ENCODE measurements at regions of chr7 and their contacts with region 1.

Region 1: GRCh38 chr7:116953727-116954442 is 584 bp downstream of the ST7 start:
- DNase-seq: peak; percentile 43 to 62
- ATAC-seq: peak; percentile 82 to 86
- H3K4me3 ChIP-seq: peak overlapping the region; percentile 74 to 88 (median 83)
- H3K27ac ChIP-seq: peak overlapping the region; percentile 94 to 98 (median 96)
- H3K4me1 ChIP-seq: peaks cover 29 to 33% of the 10 kb centered on the region in 2 donors
- H3K27me3 ChIP-seq: no peaks in the 10 kb centered on the region
- CTCF ChIP-seq: no peak
- POLR2A ChIP-seq: peak; percentile 68 to 79

Region 2: GRCh38 chr7:116988363-116988989 is 34.6 kb after region 1 on chr7:
- in situ Hi-C with region 1: no loop called
- intact Hi-C with region 1: no loop called
- DNase-seq: no peak
- ATAC-seq: no peak
- H3K4me3 ChIP-seq: no peak overlapping the region
- H3K27ac ChIP-seq: no peak overlapping the region
- H3K4me1 ChIP-seq: peaks cover 3 to 6% of the 10 kb centered on the region in 2 donors
- H3K27me3 ChIP-seq: no peaks in the 10 kb centered on the region
- CTCF ChIP-seq: peak in 3 of 5 experiments; percentile 12 to 52 (median 28)
- POLR2A ChIP-seq: no peak

Region 3: GRCh38 chr7:116999311-116999710 is 45.4 kb after region 1 on chr7:
- in situ Hi-C with region 1: no loop called
- intact Hi-C with region 1: no loop called
- DNase-seq: no peak
- ATAC-seq: no peak
- H3K4me3 ChIP-seq: no peak overlapping the region
- H3K27ac ChIP-seq: no peak overlapping the region
- H3K4me1 ChIP-seq: no peaks in the 10 kb centered on the region
- H3K27me3 ChIP-seq: no peaks in the 10 kb centered on the region
- CTCF ChIP-seq: no peak
- POLR2A ChIP-seq: no peak

Region 4: DNA sequence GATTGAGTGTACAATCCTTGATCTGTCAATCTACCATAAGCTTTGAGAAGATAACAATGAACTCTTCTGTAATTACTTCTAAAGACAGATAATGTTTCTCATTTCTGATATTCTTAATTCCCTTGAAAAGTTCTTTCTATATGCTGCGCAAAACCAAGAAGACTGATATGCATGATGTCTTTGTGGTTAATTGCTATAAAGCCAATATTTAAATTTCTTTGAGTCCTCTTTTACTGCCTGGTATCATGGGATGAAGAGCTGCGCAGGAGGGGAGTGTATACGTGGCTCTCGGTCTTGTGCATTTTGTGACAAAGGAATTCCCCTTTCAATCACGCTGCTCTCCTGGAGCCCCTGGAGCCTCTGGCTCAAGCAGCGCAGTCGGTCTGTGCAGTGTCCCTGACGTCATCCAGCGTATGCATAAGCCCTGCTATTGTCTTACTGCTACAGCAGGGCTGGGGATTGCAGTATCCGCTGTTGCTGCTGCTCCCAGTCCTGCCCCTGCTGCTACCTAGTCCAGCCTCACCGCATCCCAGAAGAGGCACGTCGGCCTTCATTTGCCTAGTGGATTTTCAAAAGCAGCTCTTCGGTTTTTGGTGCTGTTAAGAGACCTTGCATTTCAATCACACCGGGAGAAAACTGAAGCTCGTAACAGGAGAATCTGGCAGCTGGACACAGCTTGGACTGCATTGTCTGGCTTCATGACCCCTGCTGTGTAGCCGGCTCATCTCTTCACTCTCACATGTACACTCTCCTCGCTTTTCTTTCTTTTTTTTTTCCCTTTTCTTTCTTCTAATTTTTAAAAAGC is 66.1 kb after region 1 on chr7:
- in situ Hi-C with region 1: no loop called
- intact Hi-C with region 1: loop called (anchors 5 kb)
- DNase-seq: peak; percentile 15 to 53
- ATAC-seq: peak; percentile 86 to 88
- H3K4me3 ChIP-seq: peak overlapping the region; percentile 40 to 47 (median 44)
- H3K27ac ChIP-seq: peak overlapping the region; percentile 63 to 70 (median 66)
- H3K4me1 ChIP-seq: peaks cover 58 to 84% of the 10 kb centered on the region in 2 donors
- H3K27me3 ChIP-seq: no peaks in the 10 kb centered on the region
- CTCF ChIP-seq: no peak
- POLR2A ChIP-seq: no peak